Tibial artery (tissue), 4 donors: ENCODE measurements at regions of chr5 and their contacts with region 1.

Region 1: DNA sequence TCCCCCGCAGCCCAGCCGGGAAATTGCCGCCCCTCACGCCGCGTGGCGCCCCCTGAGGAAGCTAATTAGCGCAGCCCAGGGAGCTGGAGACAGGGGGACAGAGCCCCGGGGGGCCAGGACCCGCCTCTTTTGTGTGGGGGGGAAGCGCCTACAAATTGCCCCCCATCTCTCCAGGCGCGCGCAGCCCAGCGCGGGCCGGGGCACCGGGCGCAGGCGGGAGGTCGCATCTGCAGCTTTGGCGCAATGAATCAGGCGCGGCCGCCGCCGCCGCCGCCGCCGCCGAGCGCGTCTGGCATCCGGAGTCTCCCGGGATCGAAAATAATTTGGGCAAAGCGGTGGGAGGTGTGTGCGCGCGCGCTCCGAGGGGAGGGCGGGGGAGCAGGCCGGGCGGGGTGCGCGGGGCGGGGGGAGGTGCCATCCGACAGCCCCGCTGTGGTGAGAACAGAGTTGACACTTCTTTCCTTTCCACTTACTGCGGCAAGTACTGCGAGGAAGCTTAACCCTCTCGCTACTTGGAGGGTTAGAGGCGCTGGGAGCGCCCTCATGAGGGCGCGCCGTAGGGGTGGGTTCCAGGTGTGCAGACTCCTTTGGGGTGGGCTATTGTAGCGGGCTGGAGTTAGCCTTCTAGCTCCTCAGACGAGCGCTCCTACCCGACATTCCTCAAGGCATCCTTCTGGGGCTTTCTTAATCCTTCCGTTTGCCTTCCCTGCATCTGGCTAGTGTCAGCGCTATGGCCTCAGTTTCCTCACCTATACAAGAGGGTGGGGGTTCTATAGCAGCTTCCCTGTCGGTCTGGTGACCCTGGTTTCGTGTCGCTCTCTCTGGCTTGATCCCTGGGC is 63.1 kb downstream of the CXXC5 start:
- DNase-seq: peak in 1 of 2 donors; percentile 89
- H3K4me3 ChIP-seq: peak overlapping the region; percentile 53 to 67
- H3K27ac ChIP-seq: peak overlapping the region; percentile 75 to 81
- H3K4me1 ChIP-seq: peaks cover 0 to 42% (median 37%) of the 10 kb centered on the region in 4 donors
- H3K27me3 ChIP-seq: no peaks in the 10 kb centered on the region
- CTCF ChIP-seq: no peak

Region 2: GRCh38 chr5:139745800-139746690 is 34.8 kb after region 1 on chr5:
- intact Hi-C with region 1: loop called (anchors 5 kb)
- DNase-seq: peak; percentile 81 to 90
- H3K4me3 ChIP-seq: peak overlapping the region; percentile 51 to 57
- H3K27ac ChIP-seq: peak overlapping the region; percentile 77 to 85
- H3K4me1 ChIP-seq: peaks cover 5 to 44% (median 40%) of the 10 kb centered on the region in 4 donors
- H3K27me3 ChIP-seq: no peaks in the 10 kb centered on the region
- CTCF ChIP-seq: no peak